Naive thymus-derived CD4-positive, alpha-beta T cell (primary cell): ENCODE measurements at regions of chr10 and their contacts with region 1.

Region 1: GRCh38 chr10:43648398-43649184 is at the start of gene ZNF32:
- DNase-seq: peak; percentile 74 to 85 (median 80)
- ATAC-seq: peak; percentile 99
- H3K4me3 ChIP-seq: peak within 1 kb of the TSS; percentile 70
- H3K4me3 Mint-ChIP-seq: peak within 1 kb of the TSS; percentile 88 to 96 (median 95)
- H3K27ac ChIP-seq: peak within 1 kb of the TSS; percentile 94
- H3K27ac Mint-ChIP-seq: peak within 1 kb of the TSS; percentile 86 to 98 (median 94)
- H3K4me1 ChIP-seq: peaks cover 5% of the 10 kb centered on the region in 2 donors
- H3K4me1 Mint-ChIP-seq: peaks cover 8 to 31% (median 27%) of the 10 kb centered on the region in 7 donors
- H3K27me3 ChIP-seq: no peaks in the 10 kb centered on the region
- H3K27me3 Mint-ChIP-seq: peaks cover 0 to 5% (median 0%) of the 10 kb centered on the region in 5 donors
- total RNA-seq, gene ZNF32: 19.3 to 47.0 (median 22.7) TPM

Region 2: DNA sequence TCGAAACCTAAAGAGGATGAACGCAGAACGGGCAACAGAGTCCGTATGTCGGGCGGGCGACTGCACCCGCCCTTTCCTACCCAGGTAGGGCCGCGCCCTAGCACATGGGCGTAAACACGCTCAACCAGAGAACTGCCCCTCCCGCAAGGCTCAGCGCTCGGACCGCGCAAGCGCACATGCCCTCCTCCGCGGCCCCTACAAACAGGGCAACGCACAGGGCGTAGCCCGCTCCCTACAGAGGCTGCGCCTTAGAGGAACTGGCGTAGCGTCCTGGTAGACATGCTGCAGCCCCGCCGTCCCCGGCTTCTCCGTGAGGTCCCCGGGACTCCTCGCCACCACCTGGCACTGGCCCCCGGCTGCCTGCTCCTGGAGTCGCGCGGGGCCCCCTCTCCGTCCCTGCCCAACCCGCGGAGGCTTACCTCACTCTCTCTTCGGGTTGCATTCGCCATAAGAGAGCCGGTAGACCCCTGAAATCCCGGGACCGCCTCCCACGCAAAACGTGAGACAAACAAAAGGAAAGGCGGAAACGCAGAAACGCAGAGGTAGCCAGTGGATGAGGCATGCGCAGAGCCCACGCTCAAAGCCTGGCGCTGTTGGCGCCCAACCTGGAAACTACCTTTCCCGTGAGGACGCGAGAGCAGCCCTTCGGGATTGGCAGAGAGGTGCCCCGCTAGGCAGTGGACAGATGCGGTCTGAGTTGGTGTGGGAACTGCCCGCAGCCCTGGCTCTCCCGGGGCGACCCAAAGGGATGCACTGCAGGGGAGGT is 1010.4 kb before region 1 on chr10 and contains the start of gene ZNF33B:
- CTCF ChIA-PET with region 1: no interaction called
- POLR2A ChIA-PET with region 1: no interaction called
- intact Hi-C with region 1: loop called (anchors 1 kb)
- DNase-seq: peak; percentile 84 to 97 (median 94)
- ATAC-seq: peak; percentile 96
- H3K4me3 ChIP-seq: peak within 1 kb of the TSS; percentile 98
- H3K4me3 Mint-ChIP-seq: peak within 1 kb of the TSS; percentile 86 to 99 (median 97)
- H3K27ac ChIP-seq: peak within 1 kb of the TSS; percentile 84
- H3K27ac Mint-ChIP-seq: peak within 1 kb of the TSS; percentile 95 to 99 (median 97)
- H3K4me1 ChIP-seq: peaks cover 6 to 14% of the 10 kb centered on the region in 2 donors
- H3K4me1 Mint-ChIP-seq: peaks cover 29 to 62% (median 45%) of the 10 kb centered on the region in 7 donors
- H3K27me3 ChIP-seq: no peaks in the 10 kb centered on the region
- H3K27me3 Mint-ChIP-seq: no peaks in the 10 kb centered on the region
- total RNA-seq, gene ZNF33B: 26.3 to 77.1 (median 34.8) TPM

Region 3: GRCh38 chr10:43396928-43397624 is 251.5 kb before region 1 on chr10:
- CTCF ChIA-PET with region 1: no interaction called
- POLR2A ChIA-PET with region 1: no interaction called
- intact Hi-C with region 1: loop called in 1 of 2 experiments (anchors 5 kb)
- DNase-seq: peak; percentile 61 to 85 (median 68)
- ATAC-seq: peak; percentile 78
- H3K4me3 ChIP-seq: peak overlapping the region; percentile 70
- H3K4me3 Mint-ChIP-seq: peak overlapping the region; percentile 90 to 100 (median 94)
- H3K27ac ChIP-seq: peak overlapping the region; percentile 89
- H3K27ac Mint-ChIP-seq: peak overlapping the region; percentile 87 to 99 (median 97)
- H3K4me1 ChIP-seq: peaks cover 55 to 66% of the 10 kb centered on the region in 2 donors
- H3K4me1 Mint-ChIP-seq: peaks cover 67 to 93% (median 81%) of the 10 kb centered on the region in 7 donors
- H3K27me3 ChIP-seq: no peaks in the 10 kb centered on the region
- H3K27me3 Mint-ChIP-seq: no peaks in the 10 kb centered on the region

Region 4: GRCh38 chr10:43574001-43574892 is 74.3 kb before region 1 on chr10 and contains the start of gene ZNF239:
- CTCF ChIA-PET with region 1: no interaction called
- POLR2A ChIA-PET with region 1: interaction called, 35 read pairs
- intact Hi-C with region 1: loop called (anchors 1 kb)
- DNase-seq: peak; percentile 62 to 82 (median 78)
- ATAC-seq: peak; percentile 91
- H3K4me3 ChIP-seq: peak within 1 kb of the TSS; percentile 72
- H3K4me3 Mint-ChIP-seq: peak within 1 kb of the TSS; percentile 72 to 93 (median 90)
- H3K27ac ChIP-seq: peak within 1 kb of the TSS; percentile 66
- H3K27ac Mint-ChIP-seq: peak within 1 kb of the TSS; percentile 29 to 96 (median 93)
- H3K4me1 ChIP-seq: peaks cover 14 to 19% of the 10 kb centered on the region in 2 donors
- H3K4me1 Mint-ChIP-seq: peaks cover 28 to 64% (median 61%) of the 10 kb centered on the region in 7 donors
- H3K27me3 ChIP-seq: no peaks in the 10 kb centered on the region
- H3K27me3 Mint-ChIP-seq: peaks cover 0 to 3% (median 0%) of the 10 kb centered on the region in 5 donors
- total RNA-seq, gene ZNF239: 1.7 to 8.5 (median 2.3) TPM

Region 5: DNA sequence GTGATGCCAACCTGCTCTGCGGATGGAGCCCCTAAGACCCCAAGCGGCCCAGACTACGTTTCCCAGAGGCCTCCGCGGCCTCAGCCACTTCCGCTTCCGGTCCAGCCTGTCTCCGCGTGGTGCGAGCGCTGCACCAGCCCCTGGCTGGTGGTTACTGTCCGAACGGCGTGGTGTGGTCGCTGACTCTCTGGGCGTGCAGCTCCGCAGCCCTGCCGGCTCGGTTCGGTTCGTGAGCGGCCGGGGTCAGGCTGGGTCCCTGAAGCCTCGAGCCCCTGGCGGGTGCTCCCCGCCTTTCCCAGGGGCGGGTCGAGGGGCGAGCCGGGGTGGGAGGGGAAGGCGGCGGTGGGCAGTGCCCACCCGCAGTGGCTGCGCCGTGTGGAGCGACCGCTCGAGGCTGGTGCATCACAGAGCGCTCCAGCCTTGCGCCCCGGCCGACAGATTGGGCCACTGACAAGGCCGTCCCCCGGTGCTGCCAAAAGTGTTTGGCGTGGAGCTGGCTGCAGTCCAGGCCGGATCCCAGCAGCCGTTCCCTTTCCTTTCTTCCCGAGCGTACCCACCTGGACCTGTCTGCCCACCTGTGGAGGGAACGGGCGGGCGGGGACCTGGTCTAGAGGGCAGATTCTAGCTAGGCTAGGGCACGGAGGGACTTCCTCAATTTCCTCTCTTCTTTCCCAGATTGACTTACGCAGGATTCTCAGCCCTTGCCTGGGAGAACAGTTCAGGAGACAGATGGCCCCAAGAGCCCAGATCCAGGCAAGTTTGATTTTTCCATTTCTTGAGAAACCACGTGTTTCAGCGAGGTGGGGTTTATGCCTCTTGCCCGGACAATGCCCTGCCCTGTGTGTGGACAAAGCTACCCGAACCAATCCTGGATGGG is 42.0 kb before region 1 on chr10 and contains the start of gene ZNF485:
- CTCF ChIA-PET with region 1: interaction called, 3 read pairs
- POLR2A ChIA-PET with region 1: interaction called, 19 read pairs
- intact Hi-C with region 1: loop called (anchors 1 kb)
- DNase-seq: peak; percentile 41 to 61 (median 56)
- ATAC-seq: peak; percentile 90
- H3K4me3 ChIP-seq: peak within 1 kb of the TSS; percentile 82
- H3K4me3 Mint-ChIP-seq: peak within 1 kb of the TSS; percentile 80 to 93 (median 85)
- H3K27ac ChIP-seq: peak within 1 kb of the TSS; percentile 75
- H3K27ac Mint-ChIP-seq: peak within 1 kb of the TSS; percentile 62 to 88 (median 77)
- H3K4me1 ChIP-seq: peaks cover 11 to 12% of the 10 kb centered on the region in 2 donors
- H3K4me1 Mint-ChIP-seq: peaks cover 11 to 47% (median 45%) of the 10 kb centered on the region in 7 donors
- H3K27me3 ChIP-seq: no peaks in the 10 kb centered on the region
- H3K27me3 Mint-ChIP-seq: peaks cover 0 to 8% (median 0%) of the 10 kb centered on the region in 5 donors
- total RNA-seq, gene ZNF485: 2.9 to 13.1 (median 5.3) TPM

Region 6: GRCh38 chr10:43689955-43690771 is 41.6 kb after region 1 on chr10:
- CTCF ChIA-PET with region 1: interaction called, 4 read pairs
- POLR2A ChIA-PET with region 1: no interaction called
- intact Hi-C with region 1: loop called in 1 of 2 experiments (anchors 2 kb)
- DNase-seq: peak; percentile 69 to 93 (median 88)
- ATAC-seq: peak; percentile 98
- H3K4me3 ChIP-seq: peak overlapping the region; percentile 90
- H3K4me3 Mint-ChIP-seq: peak overlapping the region; percentile 88 to 93 (median 92)
- H3K27ac ChIP-seq: no peak overlapping the region
- H3K27ac Mint-ChIP-seq: peak overlapping the region in 7 of 9 donors; percentile 28 to 84 (median 43)
- H3K4me1 ChIP-seq: no peaks in the 10 kb centered on the region
- H3K4me1 Mint-ChIP-seq: peaks cover 0 to 10% (median 6%) of the 10 kb centered on the region in 7 donors
- H3K27me3 ChIP-seq: no peaks in the 10 kb centered on the region
- H3K27me3 Mint-ChIP-seq: peaks cover 8 to 27% (median 17%) of the 10 kb centered on the region in 5 donors